ENCODE measurements at regions of chr17 and their contacts with region 1.

Region 1: GRCh38 chr17:14300575-14301278 is at the start of gene HS3ST3B1:
- DNase-seq: peak; percentile 99 to 100 (median 99)
- H3K4me3 ChIP-seq: peak within 1 kb of the TSS; percentile 89 to 96
- H3K4me3 Mint-ChIP-seq: peak within 1 kb of the TSS; percentile 90 to 99 (median 98)
- H3K27ac ChIP-seq: peak within 1 kb of the TSS; percentile 61
- H3K27ac Mint-ChIP-seq: peak within 1 kb of the TSS; percentile 81 to 98 (median 93)
- H3K4me1 ChIP-seq: peaks cover 67% of the 10 kb centered on the region
- H3K4me1 Mint-ChIP-seq: peaks cover 45 to 80% (median 57%) of the 10 kb centered on the region in 4 donors
- H3K27me3 ChIP-seq: peaks cover 16% of the 10 kb centered on the region
- H3K27me3 Mint-ChIP-seq: peaks cover 16 to 29% of the 10 kb centered on the region in 2 donors
- total RNA-seq, gene HS3ST3B1: 38.8 to 40.5 TPM

Region 2: GRCh38 chr17:13337864-13338371 is 962.8 kb before region 1 on chr17:
- CTCF ChIA-PET with region 1: no interaction called
- POLR2A ChIA-PET with region 1: no interaction called
- intact Hi-C with region 1: loop called (anchors 5 kb)
- DNase-seq: peak in 4 of 5 donors; percentile 17 to 20 (median 18)
- H3K4me3 ChIP-seq: no peak overlapping the region
- H3K4me3 Mint-ChIP-seq: peak overlapping the region in 4 of 8 donors; percentile 1 to 49 (median 24)
- H3K27ac ChIP-seq: no peak overlapping the region
- H3K27ac Mint-ChIP-seq: no peak overlapping the region
- H3K4me1 ChIP-seq: peaks cover 4% of the 10 kb centered on the region
- H3K4me1 Mint-ChIP-seq: peaks cover 0 to 7% (median 2%) of the 10 kb centered on the region in 4 donors
- H3K27me3 ChIP-seq: no peaks in the 10 kb centered on the region
- H3K27me3 Mint-ChIP-seq: peaks cover 18 to 22% of the 10 kb centered on the region in 2 donors

Region 3: DNA sequence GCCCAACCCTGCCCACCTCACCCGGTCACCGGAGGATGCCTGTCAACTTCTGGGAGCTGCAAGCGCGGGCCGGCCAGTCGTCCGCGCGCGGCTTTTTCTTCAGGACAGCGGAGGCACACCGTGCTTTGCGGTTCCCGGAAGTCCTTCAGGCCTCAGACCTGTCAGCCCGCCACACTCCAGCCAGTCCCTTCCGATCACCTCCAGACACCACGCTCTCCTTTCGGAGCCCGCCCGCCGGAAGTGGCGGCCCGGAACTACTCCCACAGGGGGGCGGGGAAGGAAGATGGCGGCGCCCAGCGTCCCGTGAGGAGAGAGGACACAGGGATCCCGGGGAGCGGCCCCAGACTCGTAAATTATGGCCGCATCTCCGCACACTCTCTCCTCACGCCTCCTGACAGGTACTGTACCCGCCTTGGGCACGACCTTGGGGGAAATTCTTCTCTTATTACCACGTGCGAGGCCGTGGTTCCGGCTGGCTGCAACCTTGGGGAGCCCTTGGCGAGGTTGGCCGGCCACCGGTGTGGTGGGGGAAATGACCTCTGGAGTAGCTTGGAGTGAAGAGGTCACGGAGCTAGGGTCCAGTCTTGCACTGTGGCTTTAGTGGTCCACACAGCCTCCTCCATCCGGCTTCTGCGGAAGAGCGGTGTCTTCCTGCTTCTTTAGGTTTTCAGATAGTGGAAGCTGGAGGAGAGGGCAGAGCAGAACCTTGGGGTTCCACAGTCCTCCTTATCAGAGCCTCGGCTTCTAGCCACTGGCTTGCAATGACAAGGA is 231.3 kb before region 1 on chr17 and contains the start of gene COX10:
- CTCF ChIA-PET with region 1: interaction called, 25 read pairs
- POLR2A ChIA-PET with region 1: interaction called, 46 read pairs
- intact Hi-C with region 1: loop called (anchors 1 kb)
- DNase-seq: peak; percentile 75 to 86 (median 78)
- H3K4me3 ChIP-seq: peak within 1 kb of the TSS; percentile 96 to 98
- H3K4me3 Mint-ChIP-seq: peak within 1 kb of the TSS; percentile 93 to 96 (median 95)
- H3K27ac ChIP-seq: peak within 1 kb of the TSS; percentile 71
- H3K27ac Mint-ChIP-seq: peak within 1 kb of the TSS; percentile 89 to 95 (median 95)
- H3K4me1 ChIP-seq: peaks cover 30% of the 10 kb centered on the region
- H3K4me1 Mint-ChIP-seq: peaks cover 34 to 59% (median 46%) of the 10 kb centered on the region in 4 donors
- H3K27me3 ChIP-seq: no peaks in the 10 kb centered on the region
- H3K27me3 Mint-ChIP-seq: no peaks in the 10 kb centered on the region
- total RNA-seq, gene COX10: 16.9 to 17.6 TPM

Region 4: DNA sequence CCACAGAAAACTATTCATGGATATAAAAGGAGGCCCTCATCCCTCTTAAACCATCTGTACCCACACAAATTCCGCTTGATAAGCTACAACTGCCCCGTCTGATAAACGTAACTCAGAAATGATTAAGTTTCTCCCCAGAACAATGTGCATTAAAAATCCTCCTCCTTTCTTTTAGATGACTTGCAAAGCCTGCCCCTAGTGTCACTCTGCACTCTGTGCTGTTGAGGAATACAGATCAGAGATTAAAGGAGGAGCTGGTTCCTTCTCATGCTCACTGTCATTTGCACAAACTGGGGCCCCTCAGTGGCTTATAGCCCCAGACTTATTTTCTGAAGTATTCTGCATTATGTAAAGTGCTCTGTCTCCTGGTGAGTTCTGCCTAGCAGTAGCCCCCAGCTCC is 97.3 kb before region 1 on chr17:
- CTCF ChIA-PET with region 1: interaction called, 59 read pairs
- POLR2A ChIA-PET with region 1: interaction called, 144 read pairs
- intact Hi-C with region 1: loop called (anchors 1 kb)
- DNase-seq: peak; percentile 47 to 75 (median 57)
- H3K4me3 ChIP-seq: no peak overlapping the region
- H3K4me3 Mint-ChIP-seq: peak overlapping the region; percentile 41 to 81 (median 52)
- H3K27ac ChIP-seq: peak overlapping the region; percentile 60
- H3K27ac Mint-ChIP-seq: peak overlapping the region; percentile 87 to 96 (median 89)
- H3K4me1 ChIP-seq: peaks cover 92% of the 10 kb centered on the region
- H3K4me1 Mint-ChIP-seq: peaks cover 73 to 98% (median 84%) of the 10 kb centered on the region in 4 donors
- H3K27me3 ChIP-seq: no peaks in the 10 kb centered on the region
- H3K27me3 Mint-ChIP-seq: no peaks in the 10 kb centered on the region

Region 5: DNA sequence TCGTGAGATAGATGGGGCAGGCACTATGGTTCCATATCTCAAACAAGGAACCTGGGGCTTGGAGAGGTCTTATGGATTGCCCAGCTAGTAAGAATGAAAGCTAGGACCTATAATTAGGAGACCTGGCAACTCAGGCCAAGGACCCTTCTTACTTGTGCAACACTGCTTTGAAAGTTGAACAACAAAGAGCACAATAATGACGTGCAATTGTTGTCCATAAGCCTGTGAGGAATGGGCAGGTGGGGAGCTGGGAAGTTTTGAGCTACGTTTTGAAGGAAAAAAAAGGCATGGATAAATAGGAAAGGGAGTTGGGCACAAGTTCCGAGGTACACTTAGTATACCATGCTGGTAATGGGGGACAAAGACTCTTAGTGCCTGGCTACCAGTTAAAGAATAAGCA is 104.5 kb after region 1 on chr17:
- CTCF ChIA-PET with region 1: no interaction called
- POLR2A ChIA-PET with region 1: interaction called, 11 read pairs
- intact Hi-C with region 1: no loop called
- DNase-seq: no peak
- H3K4me3 ChIP-seq: no peak overlapping the region
- H3K4me3 Mint-ChIP-seq: peak overlapping the region in 1 of 8 donors; percentile 24
- H3K27ac ChIP-seq: no peak overlapping the region
- H3K27ac Mint-ChIP-seq: peak overlapping the region in 3 of 7 donors; percentile 70 to 85 (median 74)
- H3K4me1 ChIP-seq: peaks cover 21% of the 10 kb centered on the region
- H3K4me1 Mint-ChIP-seq: peaks cover 17 to 26% (median 22%) of the 10 kb centered on the region in 4 donors
- H3K27me3 ChIP-seq: no peaks in the 10 kb centered on the region
- H3K27me3 Mint-ChIP-seq: no peaks in the 10 kb centered on the region

Region 6: GRCh38 chr17:14489986-14490385 is 189.3 kb after region 1 on chr17:
- CTCF ChIA-PET with region 1: no interaction called
- POLR2A ChIA-PET with region 1: no interaction called
- intact Hi-C with region 1: no loop called
- DNase-seq: no peak
- H3K4me3 ChIP-seq: no peak overlapping the region
- H3K4me3 Mint-ChIP-seq: no peak overlapping the region
- H3K27ac ChIP-seq: no peak overlapping the region
- H3K27ac Mint-ChIP-seq: no peak overlapping the region
- H3K4me1 ChIP-seq: no peaks in the 10 kb centered on the region
- H3K4me1 Mint-ChIP-seq: no peaks in the 10 kb centered on the region
- H3K27me3 ChIP-seq: no peaks in the 10 kb centered on the region
- H3K27me3 Mint-ChIP-seq: no peaks in the 10 kb centered on the region

Region 7: DNA sequence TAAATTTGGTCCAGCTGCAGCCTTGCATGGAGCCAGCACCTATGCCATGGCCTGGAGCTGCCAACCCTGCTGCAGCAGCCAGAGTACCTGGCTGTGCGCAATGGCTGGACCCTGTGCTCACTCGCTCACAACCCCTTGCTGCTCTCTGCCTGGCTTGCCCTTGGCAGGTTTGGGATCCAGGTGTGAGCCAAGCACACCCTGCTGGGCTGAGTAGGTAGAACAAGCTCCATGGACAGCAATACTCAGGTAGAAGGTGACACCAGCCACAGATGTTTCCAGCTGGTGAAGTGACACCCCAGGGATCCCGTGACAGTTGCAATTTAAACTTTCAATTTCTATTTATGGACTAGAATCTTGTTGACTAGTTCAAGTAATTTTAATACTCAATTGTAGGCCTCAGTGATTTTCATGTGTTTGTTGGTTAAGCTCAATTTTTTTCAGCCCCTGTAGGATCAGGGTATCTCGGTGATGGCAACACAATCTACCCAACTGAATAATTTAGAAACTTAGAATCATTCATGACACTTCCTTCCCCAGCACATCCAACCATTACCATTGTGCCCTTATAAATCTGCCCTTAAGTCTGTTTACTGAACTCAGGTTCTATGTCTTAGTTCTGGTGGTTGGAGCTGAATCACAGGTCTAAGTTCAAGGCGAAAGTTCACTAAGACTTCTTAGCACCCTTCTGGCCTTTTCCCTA is 484.4 kb after region 1 on chr17:
- CTCF ChIA-PET with region 1: interaction called, 7 read pairs
- POLR2A ChIA-PET with region 1: interaction called, 3 read pairs
- intact Hi-C with region 1: loop called (anchors 2 kb)
- DNase-seq: peak in 4 of 5 donors; percentile 25 to 29 (median 28)
- H3K4me3 ChIP-seq: no peak overlapping the region
- H3K4me3 Mint-ChIP-seq: no peak overlapping the region
- H3K27ac ChIP-seq: no peak overlapping the region
- H3K27ac Mint-ChIP-seq: no peak overlapping the region
- H3K4me1 ChIP-seq: no peaks in the 10 kb centered on the region
- H3K4me1 Mint-ChIP-seq: no peaks in the 10 kb centered on the region
- H3K27me3 ChIP-seq: no peaks in the 10 kb centered on the region
- H3K27me3 Mint-ChIP-seq: peaks cover 3 to 14% of the 10 kb centered on the region in 2 donors

Measured in CD4-positive, alpha-beta memory T cell (primary cell).